ENCODE measurements at regions of chr16 and their contacts with region 1.

Region 1: DNA sequence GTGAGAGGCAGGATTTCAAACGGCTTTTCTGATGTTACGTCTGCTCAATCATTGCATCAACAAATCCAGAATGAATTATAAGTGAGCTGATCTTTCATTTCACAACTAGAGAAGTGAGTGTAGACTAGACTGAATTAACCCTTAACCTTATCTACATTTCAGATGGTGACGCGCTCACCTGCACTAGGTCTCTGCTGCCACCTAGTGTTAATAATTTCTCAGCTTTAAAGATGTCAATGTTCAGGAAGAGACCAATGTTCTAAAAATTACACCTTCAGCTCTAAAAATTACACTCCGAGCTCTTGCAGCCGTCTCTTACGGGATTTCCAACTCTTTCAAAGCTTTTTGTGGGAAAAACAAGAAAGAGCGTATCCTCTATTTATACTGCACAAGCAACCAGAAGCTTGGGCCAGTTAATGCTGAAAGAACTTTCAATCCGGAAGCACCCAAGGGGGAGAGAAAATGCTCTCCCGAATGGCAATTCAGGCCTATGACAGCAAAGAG is 88.2 kb upstream of the FA2H start:
- DNase-seq: peak; percentile 68
- H3K4me3 Mint-ChIP-seq: no peak overlapping the region
- H3K27ac Mint-ChIP-seq: no peak overlapping the region
- H3K4me1 Mint-ChIP-seq: peaks cover 7% of the 10 kb centered on the region
- H3K27me3 Mint-ChIP-seq: no peaks in the 10 kb centered on the region
- CTCF ChIP-seq: peak; percentile 92

Region 2: DNA sequence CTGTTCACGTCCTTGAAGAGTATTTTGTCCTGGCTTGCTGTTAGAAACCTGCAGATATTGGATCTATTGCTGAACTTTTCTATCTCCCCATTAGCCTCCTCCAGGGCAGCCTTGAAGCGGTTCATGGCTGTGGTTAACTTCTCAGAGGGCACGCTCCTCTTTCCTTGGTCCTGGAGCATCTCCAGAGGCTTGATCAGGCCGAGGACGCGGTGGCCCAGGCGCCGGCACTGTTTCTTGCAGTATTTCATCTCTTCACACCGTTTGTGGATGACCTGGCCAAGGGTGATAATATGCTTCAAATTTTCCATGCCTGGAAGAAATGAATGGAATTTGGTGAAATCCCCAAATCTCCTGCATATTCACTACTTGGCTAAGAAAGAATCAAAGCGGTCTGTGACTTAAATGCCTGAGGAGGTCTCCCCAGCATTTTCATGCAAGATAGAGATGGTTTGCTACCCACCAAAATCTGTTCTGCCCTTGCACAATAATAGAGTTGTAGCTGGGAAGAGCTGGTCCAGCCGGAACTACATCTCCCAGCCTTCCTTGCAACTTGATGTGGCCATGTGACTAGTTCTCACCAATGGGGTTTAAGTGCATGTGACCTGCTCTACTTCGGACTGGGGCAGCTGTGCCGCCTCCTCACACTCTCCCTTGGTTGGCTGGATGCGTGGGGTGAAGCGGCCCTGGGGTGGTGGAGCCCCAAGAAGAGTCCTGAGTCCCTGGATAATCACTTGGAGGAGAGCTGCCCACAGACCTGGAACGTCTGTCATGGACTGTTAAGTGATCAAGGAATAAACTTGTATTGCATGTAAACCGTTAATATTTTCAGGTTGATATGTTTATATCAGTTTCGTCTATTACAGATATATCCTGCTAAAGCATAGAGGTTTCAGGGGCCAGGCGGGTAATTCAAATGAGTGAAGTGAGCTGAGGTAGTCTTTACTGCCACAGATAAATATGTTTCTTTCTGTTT is 167.1 kb before region 1 on chr16:
- CTCF ChIA-PET with region 1: interaction called, 40 read pairs
- POLR2A ChIA-PET with region 1: interaction called, 12 read pairs
- intact Hi-C with region 1: no loop called
- DNase-seq: peak; percentile 90
- H3K4me3 Mint-ChIP-seq: peak overlapping the region; percentile 77
- H3K27ac Mint-ChIP-seq: peak overlapping the region; percentile 18
- H3K4me1 Mint-ChIP-seq: peaks cover 29% of the 10 kb centered on the region
- H3K27me3 Mint-ChIP-seq: no peaks in the 10 kb centered on the region
- CTCF ChIP-seq: no peak

Region 3: DNA sequence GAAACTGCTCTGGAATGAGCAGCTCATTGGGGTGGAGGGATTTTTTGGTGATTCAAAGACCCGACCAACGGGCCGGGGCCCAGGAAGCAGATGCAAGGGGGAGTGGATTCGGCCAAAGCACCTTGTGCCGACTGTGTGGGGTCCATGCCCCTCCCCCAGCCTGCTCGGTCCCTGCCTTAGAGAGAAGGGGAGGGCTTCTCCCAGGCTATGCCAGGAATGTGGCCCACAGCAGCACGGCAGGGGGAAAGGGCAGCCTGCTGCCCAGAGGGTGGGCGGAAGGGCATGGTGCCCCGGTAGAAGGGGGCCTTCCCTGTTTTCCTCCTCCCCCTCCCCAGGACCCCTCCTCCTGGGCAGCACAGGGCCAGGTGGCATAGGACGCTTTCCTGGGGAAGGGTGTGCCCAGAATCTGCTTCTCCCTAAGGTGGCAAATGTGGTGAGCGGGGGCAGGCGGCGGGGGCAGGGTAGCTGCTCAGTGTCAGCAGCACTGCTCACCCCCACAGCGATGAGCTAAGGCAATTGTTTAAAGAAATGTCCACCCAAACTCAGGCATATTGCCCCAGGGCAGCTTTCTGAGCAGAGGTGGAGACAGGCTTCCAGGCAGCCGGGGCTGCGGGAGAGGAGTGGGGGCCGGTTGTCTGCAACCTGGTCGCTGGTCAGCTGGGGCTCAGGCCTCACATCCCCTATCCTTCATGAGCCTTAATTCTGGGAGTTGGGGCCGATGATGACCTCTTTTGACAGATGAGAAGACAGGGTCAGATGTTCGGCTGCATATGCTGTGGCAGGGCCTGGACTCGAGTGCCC is 128.2 kb before region 1 on chr16:
- CTCF ChIA-PET with region 1: interaction called, 19 read pairs
- POLR2A ChIA-PET with region 1: no interaction called
- intact Hi-C with region 1: no loop called
- DNase-seq: no peak
- H3K4me3 Mint-ChIP-seq: no peak overlapping the region
- H3K27ac Mint-ChIP-seq: no peak overlapping the region
- H3K4me1 Mint-ChIP-seq: peaks cover 25% of the 10 kb centered on the region
- H3K27me3 Mint-ChIP-seq: no peaks in the 10 kb centered on the region
- CTCF ChIP-seq: no peak

Region 4: DNA sequence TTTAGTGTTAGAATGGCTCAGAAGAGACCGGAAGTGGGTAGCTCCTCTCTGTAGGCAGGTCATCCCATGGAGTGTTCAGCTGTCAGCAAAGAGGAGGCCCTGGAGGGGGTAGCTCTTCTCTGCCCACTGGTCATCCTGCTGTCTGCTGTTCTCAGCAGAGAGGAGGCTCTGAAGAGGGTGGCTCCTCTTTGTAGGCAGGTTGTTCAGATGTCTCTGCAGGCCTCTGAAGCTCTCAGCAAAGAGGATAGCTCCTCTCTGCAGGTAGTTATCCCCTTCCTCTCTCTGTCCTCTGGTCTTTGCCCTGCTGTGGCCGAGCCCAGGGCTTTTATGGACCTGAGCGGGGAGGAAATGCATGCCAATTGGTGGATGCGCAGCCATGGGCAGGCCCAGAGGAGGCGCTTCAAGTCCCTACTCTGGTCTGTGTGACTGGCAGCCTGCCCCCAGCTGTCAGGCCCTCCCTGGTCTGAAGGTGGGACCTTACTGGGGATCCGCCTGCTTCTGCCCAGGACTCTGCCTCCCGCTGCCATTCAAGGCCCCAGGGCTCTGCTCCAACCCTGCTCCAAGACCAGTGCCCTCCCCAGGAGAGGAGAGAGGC is 55.6 kb before region 1 on chr16:
- CTCF ChIA-PET with region 1: interaction called, 155 read pairs
- POLR2A ChIA-PET with region 1: interaction called, 15 read pairs
- intact Hi-C with region 1: no loop called
- DNase-seq: no peak
- H3K4me3 Mint-ChIP-seq: no peak overlapping the region
- H3K27ac Mint-ChIP-seq: no peak overlapping the region
- H3K4me1 Mint-ChIP-seq: peaks cover 7% of the 10 kb centered on the region
- H3K27me3 Mint-ChIP-seq: peaks cover 39% of the 10 kb centered on the region
- CTCF ChIP-seq: no peak

Region 5: GRCh38 chr16:74843719-74844433 is 18.9 kb before region 1 on chr16:
- CTCF ChIA-PET with region 1: interaction called, 26 read pairs
- POLR2A ChIA-PET with region 1: interaction called, 3 read pairs
- intact Hi-C with region 1: no loop called
- DNase-seq: peak; percentile 29
- H3K4me3 Mint-ChIP-seq: no peak overlapping the region
- H3K27ac Mint-ChIP-seq: no peak overlapping the region
- H3K4me1 Mint-ChIP-seq: no peaks in the 10 kb centered on the region
- H3K27me3 Mint-ChIP-seq: peaks cover 12% of the 10 kb centered on the region
- CTCF ChIP-seq: no peak

Region 6: DNA sequence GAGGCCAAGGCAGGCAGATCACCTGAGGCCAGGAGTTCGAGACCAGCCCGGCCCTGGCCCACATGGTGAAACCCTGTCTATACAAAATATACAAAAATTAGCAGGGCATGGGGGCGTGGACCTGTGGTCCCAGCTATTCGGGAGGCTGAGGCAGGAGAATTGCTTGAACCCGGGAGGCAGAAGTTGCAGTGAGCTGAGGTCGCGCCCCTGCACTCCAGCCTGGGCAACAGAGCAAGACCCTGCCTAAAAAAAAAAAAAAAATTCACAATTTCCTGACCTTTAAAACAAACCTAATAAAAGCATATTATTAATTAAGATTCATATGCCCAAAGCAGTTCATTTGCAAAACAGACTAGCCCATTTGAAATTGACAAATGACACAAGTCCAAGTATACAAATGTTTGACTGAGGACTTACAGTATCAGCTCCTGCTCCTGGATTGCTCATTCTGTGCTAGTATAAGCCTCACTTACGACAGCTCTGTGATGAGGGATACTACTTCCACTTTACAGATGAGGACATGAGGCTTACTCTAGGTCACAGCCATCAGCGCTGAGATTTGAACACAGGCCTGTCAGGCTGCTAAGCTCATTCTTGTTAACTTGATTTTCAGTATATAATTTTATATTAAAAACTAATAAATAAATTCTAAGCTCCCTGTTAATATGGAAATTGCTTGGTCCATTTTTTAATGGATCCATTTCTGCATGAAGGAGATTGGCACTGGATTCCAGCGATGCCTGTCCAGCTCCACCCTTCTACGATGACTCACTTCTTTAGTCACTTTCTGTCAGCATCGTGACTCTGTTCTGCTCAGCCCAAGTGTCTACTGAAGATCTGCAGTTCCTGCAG is 33.8 kb after region 1 on chr16:
- CTCF ChIA-PET with region 1: interaction called, 11 read pairs
- POLR2A ChIA-PET with region 1: interaction called, 5 read pairs
- intact Hi-C with region 1: no loop called
- DNase-seq: peak; percentile 69
- H3K4me3 Mint-ChIP-seq: no peak overlapping the region
- H3K27ac Mint-ChIP-seq: no peak overlapping the region
- H3K4me1 Mint-ChIP-seq: no peaks in the 10 kb centered on the region
- H3K27me3 Mint-ChIP-seq: no peaks in the 10 kb centered on the region
- CTCF ChIP-seq: no peak

Measured in MCF 10A (cell line).